Caco-2 (cell line): ENCODE measurements at regions of chr15 and their contacts with region 1.

Region 1: GRCh38 chr15:65980824-65981456 is 111.6 kb downstream of the RAB11A start:
- DNase-seq: peak; percentile 60 to 66
- H3K4me3 ChIP-seq: no peak overlapping the region
- H3K4me3 Mint-ChIP-seq: peak overlapping the region; percentile 55
- H3K27ac Mint-ChIP-seq: no peak overlapping the region
- H3K4me1 ChIP-seq: no peaks in the 10 kb centered on the region
- H3K4me1 Mint-ChIP-seq: peaks cover 8% of the 10 kb centered on the region
- H3K27me3 ChIP-seq: no peaks in the 10 kb centered on the region; the same call in 1 of the 2 replicates
- H3K27me3 Mint-ChIP-seq: peaks cover 8% of the 10 kb centered on the region
- CTCF ChIP-seq: peak; percentile 65

Region 2: DNA sequence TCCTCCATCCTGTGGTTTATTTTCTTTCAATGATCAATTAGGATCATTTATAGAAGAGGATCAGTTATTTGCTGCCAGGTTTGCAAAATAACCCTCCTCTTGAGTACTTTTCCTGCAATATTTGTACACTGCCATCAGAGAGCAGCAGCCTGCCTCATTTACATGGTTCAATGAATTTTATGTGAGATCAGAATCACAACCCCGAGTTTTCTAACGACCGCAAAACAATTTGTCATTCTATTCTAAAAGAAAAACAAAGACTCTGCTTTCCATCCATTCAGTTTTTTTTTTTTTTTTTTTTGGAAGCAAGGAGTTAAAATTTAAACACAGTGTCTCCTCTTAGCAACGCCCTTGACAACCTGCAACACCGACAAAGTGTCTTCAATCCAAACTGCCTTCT is 35.3 kb after region 1 on chr15:
- CTCF ChIA-PET with region 1: interaction called, 10 read pairs
- POLR2A ChIA-PET with region 1: no interaction called
- intact Hi-C with region 1: no loop called
- DNase-seq: no peak
- H3K4me3 ChIP-seq: no peak overlapping the region
- H3K4me3 Mint-ChIP-seq: no peak overlapping the region
- H3K27ac Mint-ChIP-seq: no peak overlapping the region
- H3K4me1 ChIP-seq: no peaks in the 10 kb centered on the region
- H3K4me1 Mint-ChIP-seq: no peaks in the 10 kb centered on the region
- H3K27me3 ChIP-seq: no peaks in the 10 kb centered on the region; the same call in 1 of the 2 replicates
- H3K27me3 Mint-ChIP-seq: peaks cover 8% of the 10 kb centered on the region
- CTCF ChIP-seq: no peak

Region 3: GRCh38 chr15:66043264-66043663 is 62.3 kb after region 1 on chr15:
- CTCF ChIA-PET with region 1: no interaction called
- POLR2A ChIA-PET with region 1: no interaction called
- intact Hi-C with region 1: loop called (anchors 1 kb)
- DNase-seq: peak; percentile 21 to 48
- H3K4me3 ChIP-seq: no peak overlapping the region
- H3K4me3 Mint-ChIP-seq: no peak overlapping the region
- H3K27ac Mint-ChIP-seq: peak overlapping the region; percentile 60
- H3K4me1 ChIP-seq: peaks cover 10% of the 10 kb centered on the region
- H3K4me1 Mint-ChIP-seq: peaks cover 6% of the 10 kb centered on the region
- H3K27me3 ChIP-seq: no peaks in the 10 kb centered on the region
- H3K27me3 Mint-ChIP-seq: no peaks in the 10 kb centered on the region
- CTCF ChIP-seq: no peak

Region 4: GRCh38 chr15:66085128-66085527 is 104.2 kb after region 1 on chr15:
- CTCF ChIA-PET with region 1: no interaction called
- POLR2A ChIA-PET with region 1: no interaction called
- intact Hi-C with region 1: loop called (anchors 1 kb)
- DNase-seq: peak in 1 of 2 experiments; percentile 55
- H3K4me3 ChIP-seq: no peak overlapping the region
- H3K4me3 Mint-ChIP-seq: no peak overlapping the region
- H3K27ac Mint-ChIP-seq: no peak overlapping the region
- H3K4me1 ChIP-seq: peaks cover 7% of the 10 kb centered on the region; the same call in 1 of the 2 replicates
- H3K4me1 Mint-ChIP-seq: no peaks in the 10 kb centered on the region
- H3K27me3 ChIP-seq: no peaks in the 10 kb centered on the region
- H3K27me3 Mint-ChIP-seq: peaks cover 26% of the 10 kb centered on the region
- CTCF ChIP-seq: peak; percentile 48 to 50